Activated CD4-positive, alpha-beta T cell treated with anti-CD3 and anti-CD28 coated beads, Interleukin-2, amount 10 ng/mL, durations not matched to agents 24 days and 14 days (primary cell): ENCODE measurements at regions of chr2 and their contacts with region 1.

Region 1: GRCh38 chr2:74334931-74335333 is 8.3 kb downstream of the SLC4A5 start:
- DNase-seq: peak; percentile 93
- H3K4me3 Mint-ChIP-seq: no peak overlapping the region
- H3K27ac Mint-ChIP-seq: no peak overlapping the region
- H3K4me1 Mint-ChIP-seq: no peaks in the 10 kb centered on the region
- H3K27me3 Mint-ChIP-seq: no peaks in the 10 kb centered on the region

Region 2: GRCh38 chr2:74250189-74250631 is 84.7 kb before region 1 on chr2:
- intact Hi-C with region 1: loop called (anchors 1 kb)
- DNase-seq: peak; percentile 85
- H3K4me3 Mint-ChIP-seq: no peak overlapping the region
- H3K27ac Mint-ChIP-seq: no peak overlapping the region
- H3K4me1 Mint-ChIP-seq: peaks cover 5% of the 10 kb centered on the region
- H3K27me3 Mint-ChIP-seq: no peaks in the 10 kb centered on the region

Region 3: GRCh38 chr2:74267068-74267467 is 67.9 kb before region 1 on chr2:
- intact Hi-C with region 1: loop called (anchors 1 kb)
- DNase-seq: peak; percentile 89
- H3K4me3 Mint-ChIP-seq: peak overlapping the region; percentile 51
- H3K27ac Mint-ChIP-seq: peak overlapping the region; percentile 49
- H3K4me1 Mint-ChIP-seq: peaks cover 18% of the 10 kb centered on the region
- H3K27me3 Mint-ChIP-seq: no peaks in the 10 kb centered on the region